Lower leg skin (tissue), 4 donors: ENCODE measurements at regions of chr3 and their contacts with region 1.

Region 1: GRCh38 chr3:56423661-56424099 is 44.6 kb downstream of the ERC2 start:
- DNase-seq: no peak
- H3K4me3 ChIP-seq: no peak overlapping the region
- CTCF ChIP-seq: no peak
- POLR2A ChIP-seq: no peak

Region 2: DNA sequence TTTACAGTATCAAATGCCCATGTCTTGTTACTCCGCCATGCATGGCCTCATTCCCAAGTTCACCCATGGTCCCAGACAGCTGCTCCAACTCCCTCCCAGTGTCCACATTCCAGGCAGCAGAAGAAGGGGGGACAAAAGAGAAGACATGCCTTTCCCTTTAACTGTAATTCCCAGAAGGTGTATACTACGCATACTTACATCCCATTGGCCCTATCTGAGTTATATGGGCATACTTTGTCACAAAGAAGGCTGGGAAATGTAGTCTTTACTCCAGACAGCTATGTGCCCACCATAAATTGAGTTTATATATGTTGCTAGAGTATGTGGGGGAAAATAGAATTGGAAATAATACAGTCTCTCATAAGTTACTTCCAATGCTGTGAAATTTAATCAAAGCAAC is 25.9 kb before region 1 on chr3:
- intact Hi-C with region 1: loop called (anchors 1 kb)
- DNase-seq: no peak
- H3K4me3 ChIP-seq: no peak overlapping the region
- CTCF ChIP-seq: no peak
- POLR2A ChIP-seq: no peak